Posterior cingulate gyrus (tissue), 11 donors: ENCODE measurements at regions of chr21 and their contacts with region 1.

Region 1: GRCh38 chr21:42218836-42219359 is at the start of gene ABCG1:
- DNase-seq: peak; percentile 41 to 96 (median 66)

Region 2: DNA sequence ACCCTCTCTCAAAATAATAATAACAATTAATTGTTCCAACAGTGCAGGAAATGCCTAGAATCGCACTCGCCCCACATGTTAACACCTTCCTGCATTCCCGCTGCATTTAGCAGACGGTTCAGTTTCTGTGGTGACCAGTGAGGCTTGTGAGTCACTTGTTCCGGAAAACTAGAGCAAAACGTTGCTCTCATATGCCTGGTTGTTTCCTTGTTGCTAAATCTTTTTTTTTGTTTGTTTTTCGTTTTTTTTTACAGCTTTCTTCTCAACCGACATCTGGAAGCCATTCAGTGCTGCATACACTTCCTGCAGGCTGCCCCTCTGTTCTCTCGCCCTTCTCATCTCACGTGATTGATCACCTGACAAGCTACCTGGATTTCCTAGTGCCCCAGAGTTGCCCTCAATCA is 654.0 kb before region 1 on chr21:
- intact Hi-C with region 1: no loop called
- DNase-seq: no peak

Region 3: GRCh38 chr21:42164064-42164789 is 54.7 kb before region 1 on chr21:
- intact Hi-C with region 1: loop called (anchors 10 kb)
- DNase-seq: peak in 8 of 10 donors; percentile 52 to 94 (median 70)

Region 4: GRCh38 chr21:42414928-42415769 is 196.3 kb after region 1 on chr21:
- intact Hi-C with region 1: no loop called
- DNase-seq: peak in 8 of 10 donors; percentile 24 to 92 (median 46)